A549 (cell line): ENCODE measurements at regions of chr2 and their contacts with region 1.

Region 1: DNA sequence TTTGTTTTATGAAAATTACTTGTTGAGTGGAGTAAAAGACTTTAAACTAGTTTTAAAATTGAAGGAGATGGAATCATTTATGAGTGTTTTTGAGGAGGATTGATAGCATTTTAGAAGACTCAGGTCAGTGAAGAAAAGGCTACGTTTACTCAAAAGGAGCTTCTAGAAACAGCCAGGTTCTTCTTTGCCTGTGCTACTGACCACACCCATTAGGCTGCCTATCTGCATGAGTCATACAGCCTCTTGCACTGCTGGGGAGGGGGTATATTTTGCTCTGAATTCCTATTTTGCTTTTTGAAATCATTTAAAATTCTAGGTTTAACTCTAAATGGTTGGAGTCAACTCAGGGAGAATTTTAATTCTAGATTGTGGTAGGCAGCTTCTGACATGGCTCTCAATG is 22.3 kb downstream of the EFEMP1 start:
- DNase-seq: peak in 1 of 2 experiments; percentile 42
- ATAC-seq: peak; percentile 54 to 72; a peak in 3 of 6 replicates
- H3K4me3 ChIP-seq: no peak overlapping the region
- H3K27ac ChIP-seq: peak overlapping the region; percentile 31 to 43; a peak in 5 of 6 replicates
- H3K4me1 ChIP-seq: peaks cover 12% of the 10 kb centered on the region; the same call in 2 of the 3 replicates
- CTCF ChIP-seq: no peak
- EP300 ChIP-seq: no peak
- POLR2A ChIP-seq: no peak
- RAD21 ChIP-seq: no peak

Region 2: DNA sequence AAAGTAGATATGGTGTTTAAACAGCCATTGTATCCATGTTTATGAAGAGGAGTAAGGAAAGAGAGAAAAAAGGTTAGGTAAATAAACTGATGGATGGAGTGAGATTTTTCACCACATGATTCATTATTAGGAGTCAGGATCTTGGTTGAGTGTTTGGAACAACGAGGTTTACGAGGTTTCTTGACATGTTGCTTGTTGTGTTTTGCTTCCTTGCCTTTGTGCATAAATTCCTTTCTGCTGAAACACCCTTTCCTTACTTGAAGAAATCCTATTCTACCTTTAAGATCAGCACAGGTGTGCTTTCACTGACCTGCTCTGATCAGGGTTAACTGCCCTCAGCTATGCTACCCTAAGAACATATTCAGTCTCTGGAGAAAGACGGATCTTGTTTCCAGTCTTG is 44.4 kb before region 1 on chr2:
- CTCF ChIA-PET with region 1: no interaction called
- POLR2A ChIA-PET with region 1: no interaction called
- DNase-seq: peak in 1 of 2 experiments; percentile 32
- ATAC-seq: peak in 1 of 2 experiments; percentile 52; a peak in 3 of 6 replicates
- H3K4me3 ChIP-seq: no peak overlapping the region
- H3K27ac ChIP-seq: peak overlapping the region; percentile 49 to 69
- H3K4me1 ChIP-seq: peaks cover 30% of the 10 kb centered on the region
- CTCF ChIP-seq: no peak
- EP300 ChIP-seq: no peak
- POLR2A ChIP-seq: no peak
- RAD21 ChIP-seq: no peak

Region 3: GRCh38 chr2:55916473-55917049 is 15.2 kb after region 1 on chr2:
- CTCF ChIA-PET with region 1: interaction called, 15 read pairs
- POLR2A ChIA-PET with region 1: no interaction called
- DNase-seq: no peak
- ATAC-seq: no peak
- H3K4me3 ChIP-seq: no peak overlapping the region
- H3K27ac ChIP-seq: no peak overlapping the region
- H3K4me1 ChIP-seq: no peaks in the 10 kb centered on the region
- CTCF ChIP-seq: no peak
- EP300 ChIP-seq: no peak
- POLR2A ChIP-seq: no peak
- RAD21 ChIP-seq: no peak